Heart right ventricle (tissue), 16 donors: ENCODE measurements at regions of chr18 and their contacts with region 1.

Region 1: GRCh38 chr18:24923138-24923537 is 428.8 kb downstream of the ZNF521 start:
- DNase-seq: no peak
- ATAC-seq: no peak
- H3K4me3 ChIP-seq: no peak overlapping the region
- H3K27ac ChIP-seq: no peak overlapping the region
- H3K4me1 ChIP-seq: peaks cover 0 to 5% (median 3%) of the 10 kb centered on the region in 9 donors
- H3K27me3 ChIP-seq: peaks cover 0 to 4% (median 0%) of the 10 kb centered on the region in 7 donors
- CTCF ChIP-seq: no peak

Region 2: DNA sequence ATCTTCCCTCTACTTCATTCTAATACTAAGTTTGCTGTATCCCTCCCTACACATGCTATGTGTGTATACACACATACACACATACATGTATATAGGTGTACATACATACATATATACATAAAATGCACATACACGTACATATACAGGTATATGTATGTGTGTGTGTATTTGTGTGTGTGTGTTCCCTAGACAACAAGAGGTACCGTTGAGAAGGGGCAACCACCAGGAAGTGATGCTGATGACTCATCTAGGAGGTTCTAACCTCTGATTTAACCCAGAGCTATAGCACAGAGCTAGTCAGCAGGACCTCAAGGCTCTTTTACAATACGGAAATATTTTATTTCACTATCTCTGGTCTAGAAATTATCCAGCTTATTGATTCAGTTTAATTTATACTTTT is 1094.7 kb before region 1 on chr18:
- intact Hi-C with region 1: no loop called
- DNase-seq: no peak
- ATAC-seq: peak in 1 of 8 donors; percentile 23
- H3K4me3 ChIP-seq: no peak overlapping the region
- H3K27ac ChIP-seq: no peak overlapping the region
- H3K4me1 ChIP-seq: peaks cover 0 to 31% (median 11%) of the 10 kb centered on the region in 9 donors
- H3K27me3 ChIP-seq: no peaks in the 10 kb centered on the region
- CTCF ChIP-seq: no peak

Region 3: GRCh38 chr18:24846138-24846537 is 77.0 kb before region 1 on chr18:
- intact Hi-C with region 1: no loop called
- DNase-seq: no peak
- ATAC-seq: no peak
- H3K4me3 ChIP-seq: no peak overlapping the region
- H3K27ac ChIP-seq: no peak overlapping the region
- H3K4me1 ChIP-seq: no peaks in the 10 kb centered on the region
- H3K27me3 ChIP-seq: peaks cover 0 to 8% (median 0%) of the 10 kb centered on the region in 7 donors
- CTCF ChIP-seq: no peak

Region 4: GRCh38 chr18:24878289-24878688 is 44.8 kb before region 1 on chr18:
- intact Hi-C with region 1: no loop called
- DNase-seq: peak in 1 of 2 donors; percentile 39
- ATAC-seq: peak in 7 of 8 donors; percentile 59 to 77 (median 63)
- H3K4me3 ChIP-seq: no peak overlapping the region
- H3K27ac ChIP-seq: no peak overlapping the region
- H3K4me1 ChIP-seq: peaks cover 0 to 10% (median 0%) of the 10 kb centered on the region in 9 donors
- H3K27me3 ChIP-seq: peaks cover 0 to 3% (median 0%) of the 10 kb centered on the region in 7 donors
- CTCF ChIP-seq: peak; percentile 26 to 84 (median 65)

Region 5: DNA sequence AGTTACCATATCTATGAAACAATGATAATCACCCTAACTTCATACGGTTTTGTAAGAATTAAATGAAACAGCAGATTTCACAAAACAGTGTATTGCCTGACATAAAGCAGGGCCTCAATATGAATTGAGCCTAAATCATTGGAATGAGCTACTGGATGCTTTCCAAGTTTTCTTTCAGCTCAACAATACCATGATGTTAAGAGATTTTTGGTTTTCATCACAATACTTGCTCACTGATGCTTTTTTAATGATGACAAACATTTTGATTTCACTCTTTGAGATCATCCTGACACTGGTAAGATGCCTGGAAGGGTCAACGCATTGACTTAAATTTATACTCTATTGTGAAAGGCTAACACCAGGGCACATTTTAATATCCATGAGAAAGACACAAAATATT is 51.3 kb after region 1 on chr18:
- intact Hi-C with region 1: loop called in 1 of 10 experiments (anchors 10 kb)
- DNase-seq: no peak
- ATAC-seq: no peak
- H3K4me3 ChIP-seq: no peak overlapping the region
- H3K27ac ChIP-seq: no peak overlapping the region
- H3K4me1 ChIP-seq: no peaks in the 10 kb centered on the region
- H3K27me3 ChIP-seq: peaks cover 0 to 2% (median 0%) of the 10 kb centered on the region in 7 donors
- CTCF ChIP-seq: no peak